MCF 10A (cell line): ENCODE measurements at regions of chr7 and their contacts with region 1.

Region 1: DNA sequence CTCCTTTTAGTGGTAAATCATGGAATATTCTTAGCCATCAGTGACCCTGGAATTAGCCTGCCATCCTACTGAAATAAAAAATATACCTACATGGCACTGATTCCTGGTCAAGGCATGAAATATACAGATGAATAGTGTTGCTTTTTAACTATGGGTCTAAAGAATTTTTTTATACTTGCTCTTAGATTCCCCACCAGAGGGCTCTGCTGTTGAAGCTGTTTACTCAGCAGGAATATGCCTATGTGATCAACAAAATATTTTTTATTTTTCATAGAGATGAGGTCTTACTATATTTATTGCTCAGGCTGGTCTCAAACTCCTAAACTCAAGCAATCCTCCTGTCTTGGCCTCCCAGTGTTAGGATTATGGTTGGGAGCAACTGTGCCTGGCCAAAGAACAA is 13.5 kb downstream of the ZC3HC1 start:
- DNase-seq: no peak
- H3K4me3 Mint-ChIP-seq: no peak overlapping the region
- H3K27ac Mint-ChIP-seq: no peak overlapping the region
- H3K4me1 Mint-ChIP-seq: no peaks in the 10 kb centered on the region
- H3K27me3 Mint-ChIP-seq: no peaks in the 10 kb centered on the region
- CTCF ChIP-seq: peak; percentile 33

Region 2: DNA sequence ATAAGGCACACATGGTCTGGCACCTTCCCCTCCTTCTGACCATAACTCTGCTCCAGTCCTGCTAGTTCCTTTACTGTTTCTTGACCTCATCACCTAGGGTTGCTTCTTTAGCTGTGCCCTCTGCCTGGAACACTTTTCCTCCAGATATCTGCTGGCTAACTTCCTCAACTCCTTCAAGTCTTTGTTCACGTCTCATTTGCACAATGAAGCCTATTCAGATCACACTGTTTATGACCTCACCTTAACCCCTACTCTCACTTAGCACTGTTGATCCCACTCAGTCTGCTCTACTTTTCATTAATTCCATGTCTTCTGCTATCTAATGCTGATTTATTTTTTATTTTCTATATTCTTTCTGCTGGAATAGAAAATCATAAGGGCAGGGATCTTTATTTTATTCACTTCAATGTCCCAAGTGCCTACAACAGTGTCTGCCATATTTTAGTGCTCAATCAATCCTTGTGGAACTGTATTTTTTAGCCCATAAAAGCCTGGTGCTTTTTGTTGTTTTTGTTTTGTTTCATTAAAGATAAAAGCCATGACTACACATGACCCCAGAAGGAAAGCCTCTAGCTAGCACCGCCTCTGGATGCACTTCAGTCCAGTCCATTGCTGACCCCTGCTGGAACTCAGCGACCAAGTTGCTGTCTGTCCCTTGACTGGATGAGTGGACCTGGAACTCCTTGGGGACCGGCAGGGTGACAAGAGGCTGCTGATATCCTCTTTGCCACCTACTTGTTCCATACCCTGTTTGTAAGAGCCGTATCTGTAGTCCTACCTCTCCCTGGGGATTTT is 684.0 kb after region 1 on chr7:
- CTCF ChIA-PET with region 1: no interaction called
- POLR2A ChIA-PET with region 1: no interaction called
- intact Hi-C with region 1: loop called (anchors 1 kb)
- DNase-seq: peak; percentile 62
- H3K4me3 Mint-ChIP-seq: no peak overlapping the region
- H3K27ac Mint-ChIP-seq: no peak overlapping the region
- H3K4me1 Mint-ChIP-seq: no peaks in the 10 kb centered on the region
- H3K27me3 Mint-ChIP-seq: peaks cover 18% of the 10 kb centered on the region
- CTCF ChIP-seq: peak; percentile 58

Region 3: GRCh38 chr7:130758429-130759056 is 720.8 kb after region 1 on chr7:
- CTCF ChIA-PET with region 1: interaction called, 4 read pairs
- POLR2A ChIA-PET with region 1: no interaction called
- intact Hi-C with region 1: loop called (anchors 1 kb)
- DNase-seq: peak; percentile 57
- H3K4me3 Mint-ChIP-seq: no peak overlapping the region
- H3K27ac Mint-ChIP-seq: no peak overlapping the region
- H3K4me1 Mint-ChIP-seq: peaks cover 5% of the 10 kb centered on the region
- H3K27me3 Mint-ChIP-seq: peaks cover 35% of the 10 kb centered on the region
- CTCF ChIP-seq: peak; percentile 64

Region 4: DNA sequence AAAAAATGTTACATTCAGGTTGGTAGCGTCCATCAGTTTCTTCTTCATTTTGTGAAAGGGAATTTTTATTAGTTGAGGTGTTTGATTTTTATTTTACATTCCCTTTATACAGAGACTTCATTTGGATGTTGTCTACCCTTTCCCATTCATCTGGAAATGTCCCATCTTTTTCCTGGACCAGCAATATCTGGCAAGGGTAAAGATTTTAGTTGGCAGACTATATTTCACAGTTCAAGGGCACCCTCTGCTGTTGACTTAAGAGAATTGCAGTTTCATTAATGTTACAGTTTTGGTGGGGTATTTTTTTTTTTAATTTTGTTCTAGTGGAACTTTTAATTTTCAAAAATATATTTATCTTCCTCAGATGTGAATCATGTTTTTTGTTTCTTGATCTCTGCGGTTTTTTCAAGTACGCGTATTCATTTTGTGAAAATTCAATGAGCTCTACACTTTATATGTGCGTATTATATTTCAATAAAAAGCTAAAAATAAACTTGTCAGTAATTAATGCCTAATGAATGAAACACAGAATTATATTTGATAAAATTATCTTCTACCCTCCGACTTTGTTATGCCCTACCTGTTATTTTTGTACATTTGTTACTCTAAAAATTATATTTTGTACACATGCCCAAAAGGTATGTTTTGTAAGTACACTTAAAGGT is 794.2 kb after region 1 on chr7:
- CTCF ChIA-PET with region 1: no interaction called
- POLR2A ChIA-PET with region 1: no interaction called
- intact Hi-C with region 1: loop called (anchors 5 kb)
- DNase-seq: peak; percentile 63
- H3K4me3 Mint-ChIP-seq: no peak overlapping the region
- H3K27ac Mint-ChIP-seq: no peak overlapping the region
- H3K4me1 Mint-ChIP-seq: peaks cover 6% of the 10 kb centered on the region
- H3K27me3 Mint-ChIP-seq: no peaks in the 10 kb centered on the region
- CTCF ChIP-seq: peak; percentile 76